ENCODE measurements at regions of chr1 and their contacts with region 1.

Region 1: GRCh38 chr1:207518608-207519239 is 22.8 kb downstream of the CR1 start:
- DNase-seq: no peak
- ATAC-seq: no peak
- H3K4me3 ChIP-seq: no peak overlapping the region
- H3K27ac ChIP-seq: no peak overlapping the region
- H3K4me1 ChIP-seq: no peaks in the 10 kb centered on the region
- H3K27me3 ChIP-seq: no peaks in the 10 kb centered on the region
- CTCF ChIP-seq: no peak

Region 2: DNA sequence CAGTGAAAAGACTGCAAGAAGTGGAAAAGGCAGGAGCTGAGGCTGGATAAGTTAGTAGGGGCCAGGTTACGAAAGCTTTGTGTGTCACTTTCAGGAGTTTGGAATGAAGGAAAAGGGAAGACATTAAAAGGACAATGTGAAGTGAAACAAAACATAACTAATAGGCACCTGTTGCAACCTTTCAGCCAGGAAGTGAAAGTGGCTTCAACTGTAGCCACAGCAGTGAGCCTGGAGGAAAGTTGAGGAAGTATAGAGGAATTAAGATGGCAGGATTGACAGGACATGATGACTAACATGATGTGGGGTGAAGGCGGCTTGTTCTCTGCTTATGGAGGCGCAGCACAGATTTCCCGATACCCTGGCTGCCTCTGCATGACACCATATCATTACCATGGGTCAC is 345.8 kb before region 1 on chr1:
- CTCF ChIA-PET with region 1: interaction called, 11 read pairs
- POLR2A ChIA-PET with region 1: no interaction called
- in situ Hi-C with region 1: no loop called
- intact Hi-C with region 1: no loop called
- DNase-seq: no peak
- ATAC-seq: no peak
- H3K4me3 ChIP-seq: no peak overlapping the region
- H3K27ac ChIP-seq: no peak overlapping the region
- H3K4me1 ChIP-seq: no peaks in the 10 kb centered on the region
- H3K27me3 ChIP-seq: no peaks in the 10 kb centered on the region
- CTCF ChIP-seq: no peak

Region 3: GRCh38 chr1:207284209-207284897 is 234.4 kb before region 1 on chr1:
- CTCF ChIA-PET with region 1: no interaction called
- POLR2A ChIA-PET with region 1: no interaction called
- in situ Hi-C with region 1: no loop called
- intact Hi-C with region 1: no loop called
- DNase-seq: no peak
- ATAC-seq: no peak
- H3K4me3 ChIP-seq: no peak overlapping the region
- H3K27ac ChIP-seq: no peak overlapping the region
- H3K4me1 ChIP-seq: no peaks in the 10 kb centered on the region
- H3K27me3 ChIP-seq: no peaks in the 10 kb centered on the region
- CTCF ChIP-seq: no peak

Region 4: DNA sequence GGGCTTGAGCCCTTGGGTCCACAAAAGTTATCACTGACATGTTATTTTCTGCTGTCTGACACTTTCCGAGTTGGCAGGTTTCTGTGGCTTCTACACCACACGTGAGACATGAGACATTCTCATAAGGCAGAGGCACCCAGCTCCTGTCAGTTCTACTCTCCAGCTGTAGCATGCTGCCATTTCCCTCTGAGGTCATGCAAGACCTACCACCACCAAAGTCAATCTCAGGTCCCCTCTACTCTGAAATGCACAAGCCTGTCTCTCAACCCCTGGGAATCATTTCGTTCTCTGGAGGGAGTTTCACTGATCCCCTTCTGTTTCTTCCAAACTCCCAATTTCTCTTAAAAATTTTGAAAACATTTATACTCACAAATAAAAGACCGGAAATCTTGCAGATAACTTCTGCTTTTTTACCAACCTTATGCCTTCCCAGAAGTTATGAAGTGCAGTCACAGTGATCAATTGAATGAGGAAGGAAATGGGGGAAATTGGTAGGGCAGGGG is 104.1 kb before region 1 on chr1:
- CTCF ChIA-PET with region 1: no interaction called
- POLR2A ChIA-PET with region 1: no interaction called
- in situ Hi-C with region 1: no loop called
- intact Hi-C with region 1: no loop called
- DNase-seq: no peak
- ATAC-seq: no peak
- H3K4me3 ChIP-seq: no peak overlapping the region
- H3K27ac ChIP-seq: no peak overlapping the region
- H3K4me1 ChIP-seq: no peaks in the 10 kb centered on the region
- H3K27me3 ChIP-seq: no peaks in the 10 kb centered on the region
- CTCF ChIP-seq: no peak